ENCODE measurements at regions of chr18 and their contacts with region 1.

Region 1: GRCh38 chr18:22983175-22983574 is 50.0 kb downstream of the RBBP8 start:
- DNase-seq: no peak
- ATAC-seq: peak; percentile 50
- H3K4me3 ChIP-seq: no peak overlapping the region
- H3K27ac ChIP-seq: no peak overlapping the region
- H3K4me1 ChIP-seq: peaks cover 7% of the 10 kb centered on the region
- H3K27me3 ChIP-seq: no peaks in the 10 kb centered on the region
- CTCF ChIP-seq: peak; percentile 27 to 57 (median 34); a peak in 4 of 6 replicates
- EP300 ChIP-seq: no peak
- POLR2A ChIP-seq: no peak
- RAD21 ChIP-seq: peak; percentile 73

Region 2: DNA sequence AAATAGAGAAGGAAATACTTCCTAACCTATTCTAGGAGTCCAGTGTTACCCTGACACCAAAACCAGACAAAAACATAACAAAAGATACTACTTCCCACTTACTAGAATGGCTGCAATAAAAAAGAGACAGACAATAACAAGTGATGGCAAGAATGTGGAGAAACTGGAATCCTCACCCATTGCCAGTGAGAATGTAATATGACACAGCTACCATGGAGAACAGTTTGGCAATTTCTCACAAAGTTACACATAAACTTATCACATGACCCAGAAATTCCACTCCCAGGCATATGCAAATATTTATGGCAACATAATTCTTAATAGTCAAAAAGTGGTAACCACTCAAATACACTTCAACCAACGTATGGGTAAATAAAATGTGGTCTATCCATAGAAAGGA is 355.6 kb before region 1 on chr18:
- CTCF ChIA-PET with region 1: no interaction called
- POLR2A ChIA-PET with region 1: no interaction called
- RAD21 ChIA-PET with region 1: no interaction called
- SMC1A ChIA-PET with region 1: no interaction called
- in situ Hi-C with region 1: no loop called
- intact Hi-C with region 1: no loop called
- DNase-seq: no peak
- ATAC-seq: no peak
- H3K4me3 ChIP-seq: no peak overlapping the region
- H3K27ac ChIP-seq: no peak overlapping the region
- H3K4me1 ChIP-seq: no peaks in the 10 kb centered on the region
- H3K27me3 ChIP-seq: no peaks in the 10 kb centered on the region
- CTCF ChIP-seq: no peak
- EP300 ChIP-seq: no peak
- POLR2A ChIP-seq: no peak
- RAD21 ChIP-seq: no peak

Region 3: DNA sequence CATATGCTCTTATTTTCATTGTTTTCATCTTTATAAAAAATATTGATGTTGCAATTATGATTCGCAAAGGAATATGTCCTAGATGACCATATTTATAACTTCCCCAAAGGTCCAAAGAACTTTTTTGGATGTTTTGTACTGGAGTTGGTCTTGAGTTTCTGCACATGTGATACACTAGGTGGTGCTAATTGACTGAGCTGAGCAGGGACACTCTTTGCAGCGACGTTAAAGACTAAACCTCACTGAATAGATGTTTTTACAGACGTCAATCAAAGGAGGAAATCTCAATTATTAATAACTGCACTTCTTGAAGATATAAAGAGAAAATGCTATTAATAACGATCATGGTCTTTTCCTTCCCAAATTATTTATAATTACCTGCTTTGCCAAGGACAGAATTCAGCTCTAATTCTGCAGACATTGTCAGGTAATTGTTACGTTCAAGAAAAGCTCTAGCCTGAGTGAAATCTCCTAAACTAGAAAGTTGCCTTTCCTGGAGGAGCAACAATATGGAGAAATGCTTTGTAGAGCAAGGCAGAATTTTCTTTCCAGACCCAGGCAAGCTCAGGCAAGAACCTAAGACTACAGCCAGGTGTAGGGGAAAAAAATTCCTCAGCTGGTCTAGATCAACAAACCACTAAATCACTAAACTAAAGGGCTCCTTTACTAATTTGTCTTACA is 169.4 kb before region 1 on chr18:
- CTCF ChIA-PET with region 1: interaction called, 83 read pairs
- POLR2A ChIA-PET with region 1: interaction called, 3 read pairs
- RAD21 ChIA-PET with region 1: interaction called, 38 read pairs
- SMC1A ChIA-PET with region 1: interaction called, 26 read pairs
- in situ Hi-C with region 1: no loop called
- intact Hi-C with region 1: loop called (anchors 1 kb)
- DNase-seq: no peak
- ATAC-seq: peak; percentile 78
- H3K4me3 ChIP-seq: no peak overlapping the region
- H3K27ac ChIP-seq: no peak overlapping the region
- H3K4me1 ChIP-seq: no peaks in the 10 kb centered on the region
- H3K27me3 ChIP-seq: no peaks in the 10 kb centered on the region
- CTCF ChIP-seq: peak; percentile 48 to 79 (median 65); a peak in 5 of 6 replicates
- EP300 ChIP-seq: no peak
- POLR2A ChIP-seq: no peak
- RAD21 ChIP-seq: peak; percentile 98

Region 4: DNA sequence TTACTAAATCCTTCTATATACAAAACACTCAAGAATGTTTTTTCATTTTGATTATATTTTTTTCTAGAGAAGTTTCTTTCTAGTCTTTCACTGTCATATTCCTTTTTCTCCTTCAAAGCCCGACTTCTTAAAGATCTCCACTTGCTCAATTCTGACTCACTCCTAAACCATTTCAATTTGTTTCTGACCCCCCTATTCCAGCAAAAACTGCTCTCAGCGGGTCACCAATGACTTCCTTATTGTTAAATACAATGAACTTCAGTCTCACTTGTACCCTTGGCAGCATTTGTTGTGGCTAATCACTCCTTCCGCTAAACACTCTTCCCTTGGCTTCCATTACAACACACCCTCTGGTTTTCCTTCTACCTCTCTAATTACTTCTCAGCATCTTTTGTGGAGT is 161.2 kb before region 1 on chr18:
- CTCF ChIA-PET with region 1: interaction called, 83 read pairs
- POLR2A ChIA-PET with region 1: no interaction called
- RAD21 ChIA-PET with region 1: interaction called, 38 read pairs
- SMC1A ChIA-PET with region 1: interaction called, 12 read pairs
- in situ Hi-C with region 1: no loop called
- intact Hi-C with region 1: no loop called
- DNase-seq: no peak
- ATAC-seq: no peak
- H3K4me3 ChIP-seq: no peak overlapping the region
- H3K27ac ChIP-seq: no peak overlapping the region
- H3K4me1 ChIP-seq: 0 out of 2 replicates have a peak, but pooled peaks cover 3% of the 10 kb centered on the region
- H3K27me3 ChIP-seq: no peaks in the 10 kb centered on the region
- CTCF ChIP-seq: no peak
- EP300 ChIP-seq: no peak
- POLR2A ChIP-seq: no peak
- RAD21 ChIP-seq: no peak

Region 5: DNA sequence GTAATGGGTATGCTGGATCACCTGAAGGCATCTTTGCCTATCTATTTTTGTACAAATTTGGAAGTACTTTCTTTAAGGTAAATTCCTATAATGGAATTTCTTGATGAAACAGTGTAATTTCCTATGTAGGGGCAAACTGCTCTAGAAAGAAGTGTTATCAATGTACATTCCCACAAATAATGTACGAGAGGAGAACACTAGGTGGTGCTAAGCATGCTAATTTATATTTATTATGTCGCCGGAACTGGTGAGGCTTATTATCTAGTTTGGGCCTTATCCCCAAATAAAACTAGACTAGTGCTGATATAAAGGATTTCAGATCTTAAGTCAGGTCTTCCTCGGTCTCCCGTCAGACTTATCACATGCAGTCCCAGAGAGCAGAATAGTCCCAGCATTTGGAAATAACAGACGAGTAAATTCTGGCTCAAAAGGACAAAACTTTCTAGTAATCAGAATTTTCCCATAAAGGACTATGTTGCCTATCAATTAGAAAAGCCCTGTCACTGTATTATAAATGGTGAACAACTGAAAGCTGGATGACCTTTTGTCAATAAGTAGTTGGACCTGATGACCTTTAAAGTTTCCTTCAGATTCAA is 137.0 kb before region 1 on chr18:
- CTCF ChIA-PET with region 1: interaction called, 11 read pairs
- POLR2A ChIA-PET with region 1: interaction called, 3 read pairs
- RAD21 ChIA-PET with region 1: interaction called, 15 read pairs
- SMC1A ChIA-PET with region 1: interaction called, 9 read pairs
- in situ Hi-C with region 1: no loop called
- intact Hi-C with region 1: no loop called
- DNase-seq: no peak
- ATAC-seq: 0 out of 3 replicates have a peak, but pooled peaks have one; percentile 38
- H3K4me3 ChIP-seq: no peak overlapping the region
- H3K27ac ChIP-seq: no peak overlapping the region
- H3K4me1 ChIP-seq: 0 out of 2 replicates have a peak, but pooled peaks cover 3% of the 10 kb centered on the region
- H3K27me3 ChIP-seq: no peaks in the 10 kb centered on the region
- CTCF ChIP-seq: peak; percentile 16 to 35 (median 33); a peak in 4 of 6 replicates
- EP300 ChIP-seq: no peak
- POLR2A ChIP-seq: no peak
- RAD21 ChIP-seq: peak; percentile 42

Region 6: DNA sequence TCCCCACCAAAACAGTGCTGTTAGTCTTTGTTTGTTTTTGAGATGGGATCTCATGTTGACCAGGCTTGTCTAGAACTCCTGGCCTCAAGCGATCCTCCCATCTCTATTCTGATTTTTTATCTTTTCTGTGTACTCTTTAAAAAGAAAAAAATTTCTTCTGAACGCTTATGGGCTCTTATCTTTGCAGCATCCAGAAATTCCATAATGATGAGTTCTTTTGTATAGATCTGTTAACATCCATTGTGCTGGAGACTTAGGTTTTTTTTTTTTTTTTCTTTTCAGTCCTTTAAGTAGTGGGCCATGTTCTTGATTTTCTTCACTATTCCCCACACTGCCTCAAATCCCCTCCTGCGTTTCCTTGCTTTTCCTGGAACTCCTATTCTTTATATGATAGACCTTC is 19.1 kb before region 1 on chr18:
- CTCF ChIA-PET with region 1: interaction called, 18 read pairs
- POLR2A ChIA-PET with region 1: no interaction called
- RAD21 ChIA-PET with region 1: interaction called, 3 read pairs
- SMC1A ChIA-PET with region 1: interaction called, 21 read pairs
- in situ Hi-C with region 1: no loop called
- intact Hi-C with region 1: no loop called
- DNase-seq: no peak
- ATAC-seq: no peak
- H3K4me3 ChIP-seq: no peak overlapping the region
- H3K27ac ChIP-seq: no peak overlapping the region
- H3K4me1 ChIP-seq: no peaks in the 10 kb centered on the region
- H3K27me3 ChIP-seq: no peaks in the 10 kb centered on the region
- CTCF ChIP-seq: no peak
- EP300 ChIP-seq: no peak
- POLR2A ChIP-seq: no peak
- RAD21 ChIP-seq: no peak

Region 7: DNA sequence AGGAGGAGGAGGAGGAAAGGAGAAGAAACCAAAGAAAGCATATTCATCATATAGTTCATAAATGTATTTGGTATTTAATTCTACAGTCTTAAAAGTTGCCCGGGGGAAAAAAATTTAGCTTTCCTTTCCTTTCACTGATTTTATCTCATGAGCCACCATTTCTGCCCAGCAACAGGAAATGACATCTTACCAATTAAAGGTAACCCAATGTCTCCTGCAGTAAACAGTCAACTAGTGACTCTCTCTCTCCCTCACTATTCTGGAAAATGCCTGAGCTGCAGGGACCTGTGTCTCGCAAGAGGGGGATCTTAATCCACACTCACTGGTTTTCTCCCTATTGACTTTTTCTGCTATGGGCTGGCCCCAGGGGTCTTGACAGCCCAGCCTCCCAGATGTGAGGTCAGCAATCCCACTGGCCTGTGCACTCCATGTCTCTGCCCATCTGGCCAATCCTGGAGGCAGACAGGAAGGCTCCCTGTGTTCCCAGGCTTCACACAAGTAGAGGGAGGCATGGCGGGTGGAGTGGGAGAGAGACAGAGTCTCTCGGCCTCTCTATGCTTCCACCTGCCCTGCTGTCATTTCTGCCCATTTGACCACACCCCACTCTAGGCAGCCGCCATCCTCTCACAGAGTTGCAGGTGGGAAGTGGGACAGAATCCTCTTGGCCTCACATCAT is 66.7 kb after region 1 on chr18:
- CTCF ChIA-PET with region 1: no interaction called
- POLR2A ChIA-PET with region 1: no interaction called
- RAD21 ChIA-PET with region 1: no interaction called
- SMC1A ChIA-PET with region 1: no interaction called
- in situ Hi-C with region 1: no loop called
- intact Hi-C with region 1: loop called (anchors 10 kb)
- DNase-seq: no peak
- ATAC-seq: no peak
- H3K4me3 ChIP-seq: no peak overlapping the region
- H3K27ac ChIP-seq: no peak overlapping the region
- H3K4me1 ChIP-seq: no peaks in the 10 kb centered on the region
- H3K27me3 ChIP-seq: no peaks in the 10 kb centered on the region; a peak in 1 of 4 replicates
- CTCF ChIP-seq: no peak
- EP300 ChIP-seq: no peak
- POLR2A ChIP-seq: no peak
- RAD21 ChIP-seq: no peak

Measured in GM12878 (cell line).